ENCODE measurements at regions of chr1 and their contacts with region 1.

Region 1: GRCh38 chr1:43073490-43074230 is 98.4 kb downstream of the EBNA1BP2 start:
- DNase-seq: peak; percentile 79
- H3K4me3 ChIP-seq: no peak overlapping the region
- H3K27ac ChIP-seq: no peak overlapping the region
- H3K4me1 ChIP-seq: no peaks in the 10 kb centered on the region
- H3K27me3 ChIP-seq: no peaks in the 10 kb centered on the region
- CTCF ChIP-seq: peak; percentile 75 to 83
- POLR2A ChIP-seq: no peak

Region 2: GRCh38 chr1:42576935-42577334 is 496.7 kb before region 1 on chr1:
- CTCF ChIA-PET with region 1: interaction called, 27 read pairs
- POLR2A ChIA-PET with region 1: no interaction called
- dilution Hi-C with region 1: no loop called
- intact Hi-C with region 1: loop called (anchors 2 kb)
- DNase-seq: no peak
- H3K4me3 ChIP-seq: no peak overlapping the region
- H3K27ac ChIP-seq: no peak overlapping the region
- H3K4me1 ChIP-seq: no peaks in the 10 kb centered on the region
- H3K27me3 ChIP-seq: peaks cover 3 to 4% of the 10 kb centered on the region in 2 experiments
- CTCF ChIP-seq: no peak
- POLR2A ChIP-seq: no peak

Region 3: DNA sequence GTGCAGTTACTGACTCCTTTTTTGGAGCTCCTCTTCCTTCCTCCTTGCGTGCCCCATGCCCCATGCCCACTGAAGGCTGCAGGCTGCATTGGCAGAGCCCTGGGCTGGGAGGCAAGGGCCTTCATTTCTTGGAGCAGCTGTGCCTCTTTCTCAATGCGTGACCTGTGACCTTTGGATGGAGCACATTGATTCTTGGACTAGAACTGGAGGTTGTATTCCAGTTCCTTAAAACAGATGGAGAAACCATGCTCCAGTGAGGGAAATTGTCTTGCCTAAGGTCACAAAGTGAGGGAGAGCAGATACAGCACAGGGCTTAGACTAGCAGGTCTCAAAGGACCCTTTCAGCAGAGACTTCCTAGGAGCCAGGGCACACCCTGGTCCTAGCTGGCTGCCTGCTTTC is 279.8 kb before region 1 on chr1:
- CTCF ChIA-PET with region 1: interaction called, 11 read pairs
- POLR2A ChIA-PET with region 1: no interaction called
- dilution Hi-C with region 1: no loop called
- intact Hi-C with region 1: no loop called
- DNase-seq: no peak
- H3K4me3 ChIP-seq: no peak overlapping the region
- H3K27ac ChIP-seq: no peak overlapping the region
- H3K4me1 ChIP-seq: no peaks in the 10 kb centered on the region
- H3K27me3 ChIP-seq: peaks cover 2 to 8% of the 10 kb centered on the region in 2 experiments
- CTCF ChIP-seq: no peak
- POLR2A ChIP-seq: no peak

Region 4: GRCh38 chr1:42913426-42914091 is 160.1 kb before region 1 on chr1:
- CTCF ChIA-PET with region 1: interaction called, 1,298 read pairs
- POLR2A ChIA-PET with region 1: interaction called, 9 read pairs
- dilution Hi-C with region 1: loop called (anchors 25 kb)
- intact Hi-C with region 1: loop called (anchors 1 kb)
- DNase-seq: peak; percentile 85
- H3K4me3 ChIP-seq: no peak overlapping the region
- H3K27ac ChIP-seq: no peak overlapping the region
- H3K4me1 ChIP-seq: no peaks in the 10 kb centered on the region
- H3K27me3 ChIP-seq: peaks cover 4% of the 10 kb centered on the region in 2 experiments
- CTCF ChIP-seq: peak; percentile 62 to 75
- POLR2A ChIP-seq: no peak

Region 5: DNA sequence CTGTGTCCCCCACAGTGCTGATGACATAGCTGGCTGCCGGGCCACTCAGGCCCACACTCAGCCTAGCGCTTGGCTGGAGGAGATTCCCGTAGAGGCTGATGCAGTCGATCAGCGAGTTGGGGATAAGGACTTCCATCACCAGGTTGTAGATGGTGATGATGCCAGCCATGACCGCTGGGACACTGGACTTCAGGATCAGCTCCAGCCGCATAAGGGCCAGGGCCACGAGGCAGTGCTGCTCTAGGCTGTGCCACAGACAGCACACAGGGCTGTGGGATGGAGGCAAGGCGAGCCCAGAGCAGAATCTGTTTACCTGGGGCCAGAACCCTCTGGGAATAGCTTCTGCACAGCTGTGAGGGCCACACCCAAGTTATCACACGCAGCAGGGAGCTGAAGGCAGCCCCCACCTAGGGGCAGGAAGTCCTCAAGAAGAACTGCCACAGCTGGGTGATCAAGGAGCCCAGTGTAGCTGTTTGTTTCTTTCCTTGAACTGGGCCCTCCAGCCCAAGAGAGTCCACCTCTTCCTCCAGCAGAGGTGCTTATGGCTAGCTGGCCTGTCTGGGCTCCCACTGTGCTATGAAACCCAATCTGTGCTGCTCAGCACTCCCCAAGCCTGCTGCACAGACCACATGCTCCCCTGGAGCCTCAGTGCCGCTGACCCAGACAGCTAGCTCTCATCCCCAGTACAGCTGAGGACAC is 121.2 kb before region 1 on chr1:
- CTCF ChIA-PET with region 1: interaction called, 17 read pairs
- POLR2A ChIA-PET with region 1: no interaction called
- dilution Hi-C with region 1: no loop called
- intact Hi-C with region 1: no loop called
- DNase-seq: no peak
- H3K4me3 ChIP-seq: no peak overlapping the region
- H3K27ac ChIP-seq: no peak overlapping the region
- H3K4me1 ChIP-seq: peaks cover 17% of the 10 kb centered on the region
- H3K27me3 ChIP-seq: no peaks in the 10 kb centered on the region
- CTCF ChIP-seq: no peak
- POLR2A ChIP-seq: no peak

Region 6: GRCh38 chr1:43098200-43098599 is 24.5 kb after region 1 on chr1:
- CTCF ChIA-PET with region 1: interaction called, 10 read pairs
- POLR2A ChIA-PET with region 1: no interaction called
- dilution Hi-C with region 1: no loop called
- intact Hi-C with region 1: no loop called
- DNase-seq: no peak
- H3K4me3 ChIP-seq: no peak overlapping the region
- H3K27ac ChIP-seq: no peak overlapping the region
- H3K4me1 ChIP-seq: no peaks in the 10 kb centered on the region
- H3K27me3 ChIP-seq: peaks cover 4 to 6% of the 10 kb centered on the region in 2 experiments
- CTCF ChIP-seq: no peak
- POLR2A ChIP-seq: no peak

Measured in endothelial cell of umbilical vein (primary cell).